Activated CD8-positive, alpha-beta T cell treated with anti-CD3 and anti-CD28 coated beads for 36 hours (primary cell): ENCODE measurements at regions of chr14 and their contacts with region 1.

Region 1: GRCh38 chr14:23186913-23187654 is 3.6 kb upstream of the SLC7A8 start:
- DNase-seq: peak; percentile 55
- ATAC-seq: peak; percentile 62
- H3K4me3 Mint-ChIP-seq: no peak overlapping the region
- H3K27ac Mint-ChIP-seq: no peak overlapping the region
- H3K4me1 Mint-ChIP-seq: no peaks in the 10 kb centered on the region
- H3K27me3 Mint-ChIP-seq: no peaks in the 10 kb centered on the region
- CTCF ChIP-seq: peak; percentile 80

Region 2: DNA sequence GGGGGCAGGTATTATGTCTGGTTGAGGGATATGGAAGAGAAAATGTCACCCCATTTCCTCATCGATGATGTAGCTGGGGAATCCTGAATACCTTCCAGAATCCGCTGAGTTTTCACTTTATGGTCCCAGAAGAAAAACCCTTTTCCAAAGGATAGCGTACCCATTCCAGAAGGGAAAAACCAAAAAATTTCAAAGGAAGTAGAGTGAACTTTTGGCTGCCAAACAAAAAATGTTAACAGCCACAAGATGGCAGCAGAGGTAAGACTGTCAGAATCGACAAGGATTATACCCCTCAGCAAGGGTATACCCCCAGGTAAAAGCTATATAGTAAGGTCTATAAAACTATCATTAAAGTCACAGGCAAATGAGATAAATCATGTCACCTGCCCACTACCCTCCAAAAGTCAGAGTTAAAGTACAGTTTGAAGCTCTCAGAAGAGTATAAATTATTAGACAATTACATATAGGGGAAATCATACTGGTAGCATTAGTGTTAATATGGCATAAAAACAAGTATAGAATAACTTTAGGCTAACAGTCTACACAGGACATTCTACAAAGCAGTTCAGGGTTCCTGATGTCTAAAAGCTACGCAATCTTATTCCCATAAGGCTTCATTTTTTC is 110.2 kb before region 1 on chr14:
- CTCF ChIA-PET with region 1: interaction called, 28 read pairs
- POLR2A ChIA-PET with region 1: no interaction called
- intact Hi-C with region 1: no loop called
- DNase-seq: peak; percentile 39
- ATAC-seq: peak; percentile 70
- H3K4me3 Mint-ChIP-seq: no peak overlapping the region
- H3K27ac Mint-ChIP-seq: no peak overlapping the region
- H3K4me1 Mint-ChIP-seq: peaks cover 9% of the 10 kb centered on the region
- H3K27me3 Mint-ChIP-seq: no peaks in the 10 kb centered on the region
- CTCF ChIP-seq: peak; percentile 70

Region 3: GRCh38 chr14:23114669-23115491 is 72.2 kb before region 1 on chr14:
- CTCF ChIA-PET with region 1: interaction called, 290 read pairs
- POLR2A ChIA-PET with region 1: interaction called, 3 read pairs
- intact Hi-C with region 1: no loop called
- DNase-seq: no peak
- ATAC-seq: no peak
- H3K4me3 Mint-ChIP-seq: no peak overlapping the region
- H3K27ac Mint-ChIP-seq: no peak overlapping the region
- H3K4me1 Mint-ChIP-seq: peaks cover 30% of the 10 kb centered on the region
- H3K27me3 Mint-ChIP-seq: no peaks in the 10 kb centered on the region
- CTCF ChIP-seq: no peak

Region 4: GRCh38 chr14:23130871-23131270 is 56.2 kb before region 1 on chr14:
- CTCF ChIA-PET with region 1: interaction called, 290 read pairs
- POLR2A ChIA-PET with region 1: no interaction called
- intact Hi-C with region 1: loop called (anchors 2 kb)
- DNase-seq: no peak
- ATAC-seq: no peak
- H3K4me3 Mint-ChIP-seq: no peak overlapping the region
- H3K27ac Mint-ChIP-seq: no peak overlapping the region
- H3K4me1 Mint-ChIP-seq: no peaks in the 10 kb centered on the region
- H3K27me3 Mint-ChIP-seq: no peaks in the 10 kb centered on the region
- CTCF ChIP-seq: no peak

Region 5: GRCh38 chr14:23174276-23175184 is 12.6 kb before region 1 on chr14:
- CTCF ChIA-PET with region 1: interaction called, 45 read pairs
- POLR2A ChIA-PET with region 1: interaction called, 3 read pairs
- intact Hi-C with region 1: no loop called
- DNase-seq: no peak
- ATAC-seq: no peak
- H3K4me3 Mint-ChIP-seq: no peak overlapping the region
- H3K27ac Mint-ChIP-seq: no peak overlapping the region
- H3K4me1 Mint-ChIP-seq: peaks cover 30% of the 10 kb centered on the region
- H3K27me3 Mint-ChIP-seq: peaks cover 3% of the 10 kb centered on the region
- CTCF ChIP-seq: no peak

Region 6: DNA sequence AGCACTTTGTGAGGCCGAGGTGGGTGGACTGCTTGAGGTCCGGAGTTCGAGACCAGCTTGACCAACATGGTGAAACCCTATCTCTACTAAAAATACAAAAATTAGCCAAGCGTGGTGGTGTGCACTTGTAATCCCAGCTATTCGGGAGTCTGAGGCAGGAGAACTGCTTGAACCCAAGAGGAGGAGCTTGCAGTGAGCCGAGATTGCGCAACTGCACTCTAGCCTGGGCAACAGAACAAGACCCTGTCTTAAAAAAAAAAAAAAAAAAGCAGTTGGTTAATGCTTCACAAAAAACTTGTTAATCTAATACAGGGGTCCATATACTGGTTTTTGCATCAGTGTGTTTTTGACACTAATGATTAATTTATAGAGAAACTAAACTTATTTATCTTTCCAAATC is 14.9 kb after region 1 on chr14:
- CTCF ChIA-PET with region 1: interaction called, 24 read pairs
- POLR2A ChIA-PET with region 1: no interaction called
- intact Hi-C with region 1: no loop called
- DNase-seq: no peak
- ATAC-seq: no peak
- H3K4me3 Mint-ChIP-seq: no peak overlapping the region
- H3K27ac Mint-ChIP-seq: no peak overlapping the region
- H3K4me1 Mint-ChIP-seq: no peaks in the 10 kb centered on the region
- H3K27me3 Mint-ChIP-seq: peaks cover 3% of the 10 kb centered on the region
- CTCF ChIP-seq: no peak

Region 7: GRCh38 chr14:23406244-23406643 is 219.2 kb after region 1 on chr14:
- CTCF ChIA-PET with region 1: no interaction called
- POLR2A ChIA-PET with region 1: no interaction called
- intact Hi-C with region 1: no loop called
- DNase-seq: no peak
- ATAC-seq: no peak
- H3K4me3 Mint-ChIP-seq: no peak overlapping the region
- H3K27ac Mint-ChIP-seq: no peak overlapping the region
- H3K4me1 Mint-ChIP-seq: no peaks in the 10 kb centered on the region
- H3K27me3 Mint-ChIP-seq: no peaks in the 10 kb centered on the region
- CTCF ChIP-seq: no peak